ENCODE measurements at regions of chr7 and their contacts with region 1.

Region 1: DNA sequence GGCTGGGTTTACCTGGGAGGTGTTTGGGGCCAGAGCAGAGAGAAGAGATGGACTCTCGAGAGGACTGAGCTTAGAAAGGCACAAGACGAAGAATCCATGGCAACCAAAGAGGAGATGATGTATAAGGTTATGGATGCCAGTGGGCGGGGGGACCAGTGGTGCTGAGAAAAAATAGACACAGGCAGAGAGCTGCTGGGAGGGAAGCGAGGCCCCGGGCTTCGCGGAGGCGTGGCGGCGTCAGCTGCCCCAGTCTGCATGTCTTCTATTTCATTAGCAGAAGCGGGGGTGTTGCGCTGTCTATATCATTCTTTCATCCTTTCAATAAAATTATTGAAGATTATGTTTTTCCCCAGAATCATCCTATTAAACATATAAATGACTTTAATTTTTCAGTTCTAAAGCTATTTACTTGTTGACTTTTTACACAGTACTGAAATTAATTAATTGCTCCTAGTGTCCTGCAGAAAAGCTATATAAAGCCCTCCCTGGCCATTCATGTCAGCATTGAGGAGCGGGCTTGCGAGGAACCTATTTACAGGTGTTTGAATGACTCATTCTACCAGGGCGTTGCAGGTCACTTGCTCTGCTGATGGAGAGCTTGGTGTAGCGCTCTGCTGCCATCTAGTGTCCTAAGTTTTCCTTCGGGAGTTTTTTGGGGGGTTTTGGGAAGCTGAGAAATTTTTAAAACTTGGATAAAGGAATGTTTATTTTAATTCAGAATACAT is 42.9 kb upstream of the BHLHA15 start:
- DNase-seq: peak; percentile 91
- H3K4me3 ChIP-seq: no peak overlapping the region
- H3K27ac ChIP-seq: no peak overlapping the region
- H3K4me1 ChIP-seq: peaks cover 0 to 14% of the 10 kb centered on the region in 2 experiments; a peak in 2 of 4 replicates
- H3K27me3 ChIP-seq: no peaks in the 10 kb centered on the region
- CTCF ChIP-seq: peak; percentile 100
- EP300 ChIP-seq: no peak
- RAD21 ChIP-seq: peak; percentile 95

Region 2: DNA sequence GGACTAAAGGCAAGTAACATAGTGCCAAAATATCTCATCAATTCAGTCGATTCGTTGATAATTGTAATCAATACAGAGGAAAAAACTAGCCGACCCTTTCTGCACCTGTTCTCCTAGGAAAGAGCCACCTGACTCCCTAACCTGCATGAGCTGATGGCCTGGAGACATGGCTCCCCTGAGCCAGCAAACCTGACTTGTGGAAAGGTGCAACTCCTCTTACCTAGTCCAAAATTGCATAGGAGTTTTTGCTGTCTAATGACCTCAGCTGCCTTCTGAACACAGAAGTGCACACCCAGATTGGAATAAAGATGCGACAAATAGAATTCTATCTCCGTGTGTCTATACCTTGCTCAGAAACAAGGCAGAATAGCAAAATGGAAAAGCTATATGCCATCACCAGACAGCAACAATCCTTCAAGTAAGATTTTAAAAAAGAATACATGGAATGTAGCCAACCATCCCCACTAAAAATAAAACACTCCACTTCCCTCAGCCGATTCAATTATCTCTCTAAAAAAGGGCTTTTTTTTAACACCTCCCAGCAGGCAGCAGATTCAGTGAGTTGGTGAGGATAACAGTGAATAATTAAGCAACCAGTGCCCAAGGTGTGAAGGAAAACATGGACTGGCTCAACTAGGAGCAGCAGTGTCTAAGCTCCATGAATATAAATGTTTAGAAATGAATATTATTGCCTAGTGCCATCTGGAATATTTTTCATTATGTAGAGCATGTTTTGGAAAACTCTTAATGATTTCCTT is 88.3 kb before region 1 on chr7:
- CTCF ChIA-PET with region 1: interaction called, 10 read pairs
- POLR2A ChIA-PET with region 1: interaction called, 3 read pairs
- DNase-seq: no peak
- H3K4me3 ChIP-seq: no peak overlapping the region
- H3K27ac ChIP-seq: no peak overlapping the region
- H3K4me1 ChIP-seq: no peaks in the 10 kb centered on the region
- H3K27me3 ChIP-seq: peaks cover 38% of the 10 kb centered on the region; the same call in 1 of the 2 replicates
- CTCF ChIP-seq: no peak
- EP300 ChIP-seq: no peak
- RAD21 ChIP-seq: no peak

Region 3: GRCh38 chr7:98106647-98107445 is 61.5 kb before region 1 on chr7 and contains the start of gene LMTK2:
- CTCF ChIA-PET with region 1: interaction called, 328 read pairs
- POLR2A ChIA-PET with region 1: interaction called, 3 read pairs
- DNase-seq: peak; percentile 100
- H3K4me3 ChIP-seq: peak within 1 kb of the TSS; percentile 87 to 99
- H3K27ac ChIP-seq: peak within 1 kb of the TSS; percentile 64 to 75; a peak in 3 of 4 replicates
- H3K4me1 ChIP-seq: peaks cover 9 to 12% of the 10 kb centered on the region in 2 experiments; a peak in 3 of 4 replicates
- H3K27me3 ChIP-seq: no peaks in the 10 kb centered on the region
- CTCF ChIP-seq: peak; percentile 100
- EP300 ChIP-seq: no peak; a peak in 1 of 4 replicates
- RAD21 ChIP-seq: peak; percentile 76
- polyA plus RNA-seq, gene LMTK2: 6.8 and 9.0 TPM in 2 replicates

Region 4: DNA sequence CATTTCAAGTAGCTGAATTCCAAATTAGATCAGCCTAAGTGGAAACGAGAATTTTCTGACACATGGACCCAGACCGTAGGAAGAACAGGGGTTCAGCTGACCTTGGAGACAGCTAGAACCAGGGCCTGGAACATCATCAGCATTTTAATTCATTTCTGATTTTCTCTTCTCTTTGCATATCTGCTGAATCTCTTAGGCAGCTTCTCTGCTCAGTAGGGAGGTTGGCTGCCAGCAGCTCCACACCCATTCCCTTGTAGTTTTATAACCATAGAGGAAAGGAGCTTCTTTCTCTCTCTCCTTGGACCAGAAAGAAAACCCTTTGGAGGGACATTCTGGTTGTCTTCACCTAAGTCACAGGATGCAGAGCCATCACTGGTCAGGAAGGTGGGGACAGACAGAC is 25.7 kb before region 1 on chr7:
- CTCF ChIA-PET with region 1: interaction called, 126 read pairs
- POLR2A ChIA-PET with region 1: no interaction called
- DNase-seq: no peak
- H3K4me3 ChIP-seq: no peak overlapping the region
- H3K27ac ChIP-seq: no peak overlapping the region
- H3K4me1 ChIP-seq: no peaks in the 10 kb centered on the region
- H3K27me3 ChIP-seq: no peaks in the 10 kb centered on the region
- CTCF ChIP-seq: no peak
- EP300 ChIP-seq: no peak
- RAD21 ChIP-seq: no peak

Region 5: GRCh38 chr7:98178347-98178746 is 10.0 kb after region 1 on chr7:
- CTCF ChIA-PET with region 1: interaction called, 133 read pairs
- POLR2A ChIA-PET with region 1: no interaction called
- DNase-seq: no peak
- H3K4me3 ChIP-seq: no peak overlapping the region
- H3K27ac ChIP-seq: no peak overlapping the region
- H3K4me1 ChIP-seq: peaks cover 0 to 10% of the 10 kb centered on the region in 2 experiments; a peak in 1 of 4 replicates
- H3K27me3 ChIP-seq: no peaks in the 10 kb centered on the region
- CTCF ChIP-seq: no peak
- EP300 ChIP-seq: no peak
- RAD21 ChIP-seq: no peak

Region 6: GRCh38 chr7:98294796-98295382 is 126.5 kb after region 1 on chr7:
- CTCF ChIA-PET with region 1: no interaction called
- POLR2A ChIA-PET with region 1: no interaction called
- DNase-seq: peak; percentile 93
- H3K4me3 ChIP-seq: no peak overlapping the region; a peak in 1 of 4 replicates
- H3K27ac ChIP-seq: no peak overlapping the region
- H3K4me1 ChIP-seq: peaks cover 0 to 6% of the 10 kb centered on the region in 2 experiments; a peak in 1 of 4 replicates
- H3K27me3 ChIP-seq: no peaks in the 10 kb centered on the region
- CTCF ChIP-seq: peak; percentile 87
- EP300 ChIP-seq: no peak
- RAD21 ChIP-seq: peak; percentile 90

Measured in SK-N-SH (cell line).